IMR-90 (cell line): ENCODE measurements at regions of chr11 and their contacts with region 1.

Region 1: GRCh38 chr11:94845622-94846021 is 77.5 kb downstream of the AMOTL1 start:
- DNase-seq: peak; percentile 89
- ATAC-seq: peak; percentile 94
- H3K4me3 ChIP-seq: no peak overlapping the region
- H3K27ac ChIP-seq: peak overlapping the region; percentile 97; the same call in 1 of the 2 replicates
- H3K4me1 ChIP-seq: peaks cover 12% of the 10 kb centered on the region
- H3K27me3 ChIP-seq: no peaks in the 10 kb centered on the region
- CTCF ChIP-seq: no peak
- POLR2A ChIP-seq: no peak
- RAD21 ChIP-seq: no peak

Region 2: DNA sequence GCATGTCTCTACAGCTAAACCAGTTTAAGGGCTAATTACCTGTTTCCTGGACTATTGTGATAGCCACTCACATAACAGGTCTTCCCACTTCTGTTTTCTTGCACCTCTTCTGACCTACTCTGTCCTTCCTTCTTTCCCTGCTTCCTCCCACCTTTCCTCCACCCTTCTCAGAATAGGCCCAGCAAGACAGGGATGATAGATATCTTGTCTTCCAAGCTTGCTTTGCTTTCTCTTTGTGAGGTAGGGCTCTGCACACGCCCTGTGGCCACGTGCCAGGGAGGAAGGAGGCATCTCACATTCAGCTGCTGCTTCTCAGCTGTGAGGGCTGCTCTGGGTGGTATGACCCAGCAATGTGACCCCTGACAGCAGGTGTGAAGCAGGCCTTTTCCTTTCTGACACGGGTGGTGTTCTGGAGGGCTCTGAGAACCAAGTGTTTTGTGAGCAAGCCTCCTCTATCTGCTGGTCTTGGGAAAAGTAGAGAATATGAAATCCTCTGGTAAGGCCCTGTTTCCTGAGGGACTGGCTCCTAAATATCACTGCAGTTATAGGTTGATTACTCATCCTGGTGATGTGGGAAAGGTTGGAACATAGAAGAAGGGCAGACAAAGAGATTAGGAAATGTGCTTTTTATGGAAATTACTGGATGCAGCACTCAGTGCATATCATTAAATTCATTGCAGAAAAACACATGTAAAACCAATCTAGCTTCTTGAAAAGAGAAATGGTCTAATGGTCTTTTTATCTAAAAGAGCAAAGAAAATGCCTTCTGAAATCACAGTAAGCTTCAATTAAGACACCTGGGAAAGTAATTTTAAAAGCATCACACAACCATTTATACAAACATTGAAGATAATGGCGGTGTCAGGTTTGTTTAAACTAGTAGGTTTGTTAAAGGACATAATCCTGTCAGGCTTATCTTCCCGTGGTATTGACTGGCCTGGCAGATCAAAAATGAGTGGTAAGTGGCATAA is 69.0 kb before region 1 on chr11:
- CTCF ChIA-PET with region 1: no interaction called
- POLR2A ChIA-PET with region 1: no interaction called
- dilution Hi-C with region 1: no loop called
- in situ Hi-C with region 1: no loop called
- intact Hi-C with region 1: no loop called
- DNase-seq: peak; percentile 74
- ATAC-seq: peak; percentile 31
- H3K4me3 ChIP-seq: no peak overlapping the region
- H3K27ac ChIP-seq: peak overlapping the region; percentile 50
- H3K4me1 ChIP-seq: peaks cover 19% of the 10 kb centered on the region
- H3K27me3 ChIP-seq: no peaks in the 10 kb centered on the region
- CTCF ChIP-seq: no peak
- POLR2A ChIP-seq: no peak
- RAD21 ChIP-seq: no peak

Region 3: DNA sequence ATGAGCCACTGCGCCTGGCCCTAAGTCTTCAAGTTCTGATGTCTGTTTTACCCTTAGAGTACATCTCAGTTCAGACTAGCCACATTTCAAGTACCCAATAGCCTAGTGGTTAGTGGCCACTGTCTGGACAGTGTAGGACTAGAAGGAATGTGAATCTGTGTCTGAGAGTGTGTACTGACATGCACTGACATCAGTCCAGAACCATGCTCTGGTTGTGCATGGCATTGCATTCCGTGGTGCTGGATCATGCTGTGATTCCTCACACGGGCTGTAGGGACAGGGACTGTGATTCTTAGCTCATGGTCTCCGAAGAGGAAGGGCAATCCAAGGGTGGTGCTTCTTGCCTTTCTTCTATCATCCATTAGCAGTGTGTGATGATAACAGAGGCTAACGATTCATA is 36.4 kb before region 1 on chr11:
- CTCF ChIA-PET with region 1: no interaction called
- POLR2A ChIA-PET with region 1: no interaction called
- dilution Hi-C with region 1: no loop called
- in situ Hi-C with region 1: no loop called
- intact Hi-C with region 1: loop called (anchors 5 kb)
- DNase-seq: peak; percentile 63
- ATAC-seq: peak; percentile 46
- H3K4me3 ChIP-seq: no peak overlapping the region
- H3K27ac ChIP-seq: peak overlapping the region; percentile 40; the same call in 1 of the 2 replicates
- H3K4me1 ChIP-seq: peaks cover 37% of the 10 kb centered on the region
- H3K27me3 ChIP-seq: no peaks in the 10 kb centered on the region
- CTCF ChIP-seq: no peak
- POLR2A ChIP-seq: no peak
- RAD21 ChIP-seq: no peak